B cell (primary cell): ENCODE measurements at regions of chr22 and their contacts with region 1.

Region 1: DNA sequence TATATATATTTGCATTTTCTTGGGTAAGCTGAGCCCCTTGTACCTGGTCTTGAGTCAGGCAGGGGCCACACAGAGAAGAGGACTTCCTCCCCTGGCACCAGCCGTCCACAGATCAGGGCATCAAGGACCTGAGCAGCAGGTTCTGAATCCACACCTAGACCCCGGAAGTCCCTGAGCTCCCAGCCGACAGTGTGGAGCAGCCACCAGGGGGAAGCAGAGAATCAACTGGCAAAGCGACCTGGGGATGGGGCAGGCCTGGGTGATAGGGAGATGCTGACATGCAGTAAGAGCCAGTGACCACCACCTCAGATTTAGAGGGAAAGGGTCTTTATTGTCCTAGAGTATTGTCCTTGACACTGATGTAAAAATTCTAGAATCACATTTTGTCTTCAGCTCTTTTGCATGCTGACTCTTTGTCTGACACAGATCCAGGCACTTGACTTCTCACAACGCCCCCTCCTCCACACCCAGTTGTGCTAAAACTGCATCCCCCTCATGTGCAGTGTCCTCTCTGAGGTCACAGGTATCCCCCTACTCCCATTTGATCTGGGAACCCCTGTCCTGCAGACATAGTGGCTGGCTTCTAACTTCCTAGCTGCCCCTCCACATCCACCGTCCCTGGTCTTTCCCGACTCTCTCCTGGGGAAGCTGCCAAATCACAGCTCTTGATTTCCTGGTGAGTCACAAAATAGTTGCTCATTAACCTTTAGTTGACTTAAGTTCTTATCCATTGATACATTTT is 109.3 kb downstream of the GGTLC2 start:
- DNase-seq: peak; percentile 79
- ATAC-seq: peak; percentile 86
- H3K4me3 ChIP-seq: no peak overlapping the region
- H3K4me3 Mint-ChIP-seq: no peak overlapping the region
- H3K27ac ChIP-seq: peak overlapping the region in 1 of 2 donors; percentile 12
- H3K27ac Mint-ChIP-seq: peak overlapping the region; percentile 72
- H3K4me1 ChIP-seq: peaks cover 14 to 17% of the 10 kb centered on the region in 2 donors
- H3K4me1 Mint-ChIP-seq: peaks cover 27% of the 10 kb centered on the region
- H3K27me3 ChIP-seq: no peaks in the 10 kb centered on the region
- H3K27me3 Mint-ChIP-seq: no peaks in the 10 kb centered on the region
- CTCF ChIP-seq: peak; percentile 74

Region 2: GRCh38 chr22:22666307-22667091 is 87.2 kb before region 1 on chr22:
- CTCF ChIA-PET with region 1: interaction called, 25 read pairs
- POLR2A ChIA-PET with region 1: no interaction called
- intact Hi-C with region 1: no loop called
- DNase-seq: peak; percentile 63
- ATAC-seq: peak; percentile 78
- H3K4me3 ChIP-seq: no peak overlapping the region
- H3K4me3 Mint-ChIP-seq: no peak overlapping the region
- H3K27ac ChIP-seq: no peak overlapping the region
- H3K27ac Mint-ChIP-seq: peak overlapping the region; percentile 6
- H3K4me1 ChIP-seq: peaks cover 6 to 18% of the 10 kb centered on the region in 2 donors
- H3K4me1 Mint-ChIP-seq: peaks cover 17% of the 10 kb centered on the region
- H3K27me3 ChIP-seq: peaks cover 0 to 2% (median 0%) of the 10 kb centered on the region in 4 experiments
- H3K27me3 Mint-ChIP-seq: peaks cover 3% of the 10 kb centered on the region
- CTCF ChIP-seq: peak; percentile 71

Region 3: GRCh38 chr22:22692707-22693530 is 60.8 kb before region 1 on chr22:
- CTCF ChIA-PET with region 1: interaction called, 24 read pairs
- POLR2A ChIA-PET with region 1: no interaction called
- intact Hi-C with region 1: no loop called
- DNase-seq: peak; percentile 83
- ATAC-seq: peak; percentile 81
- H3K4me3 ChIP-seq: no peak overlapping the region
- H3K4me3 Mint-ChIP-seq: peak overlapping the region; percentile 71
- H3K27ac ChIP-seq: peak overlapping the region in 1 of 2 donors; percentile 26
- H3K27ac Mint-ChIP-seq: peak overlapping the region; percentile 85
- H3K4me1 ChIP-seq: peaks cover 28 to 44% of the 10 kb centered on the region in 2 donors
- H3K4me1 Mint-ChIP-seq: peaks cover 34% of the 10 kb centered on the region
- H3K27me3 ChIP-seq: no peaks in the 10 kb centered on the region
- H3K27me3 Mint-ChIP-seq: no peaks in the 10 kb centered on the region
- CTCF ChIP-seq: peak; percentile 87

Region 4: DNA sequence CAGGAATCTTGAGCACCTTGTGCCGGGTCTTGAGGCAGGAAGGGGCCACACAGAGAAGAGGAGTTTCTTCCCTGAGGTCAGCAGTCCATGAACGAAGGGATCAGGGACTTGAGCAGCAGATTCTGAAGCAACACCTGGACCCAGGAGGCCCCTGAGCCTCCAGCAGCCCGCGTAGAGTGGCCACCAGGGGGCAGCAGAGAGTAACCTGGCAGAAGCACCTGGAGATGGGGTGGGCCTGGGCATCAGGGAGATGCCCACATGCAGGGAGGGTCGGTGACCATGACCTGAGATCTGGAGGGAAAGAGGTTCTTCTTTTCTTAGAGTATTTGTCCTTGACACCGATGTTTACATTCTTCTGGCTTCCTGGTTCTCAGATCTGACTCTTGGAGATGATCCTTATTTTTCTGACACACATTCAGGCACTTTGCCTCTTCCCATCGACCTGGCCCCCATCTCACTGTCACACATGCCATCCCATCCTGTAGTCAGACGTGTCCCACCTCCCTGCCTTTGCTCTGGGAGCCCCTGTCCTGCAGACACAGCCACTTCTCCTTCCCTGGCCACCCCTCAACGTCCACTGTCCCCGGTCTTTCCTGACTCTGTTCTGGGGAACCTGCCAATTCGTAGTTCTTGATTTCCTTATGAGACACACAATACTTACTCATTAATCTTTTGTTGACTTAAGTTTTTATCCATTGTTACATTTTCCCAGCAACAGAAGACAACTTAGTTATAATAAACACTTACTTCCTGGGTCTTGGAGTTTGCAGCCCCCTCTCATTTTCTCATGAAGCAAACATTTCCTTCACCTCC is 42.8 kb before region 1 on chr22:
- CTCF ChIA-PET with region 1: interaction called, 22 read pairs
- POLR2A ChIA-PET with region 1: no interaction called
- intact Hi-C with region 1: loop called (anchors 5 kb)
- DNase-seq: peak; percentile 80
- ATAC-seq: peak; percentile 48
- H3K4me3 ChIP-seq: no peak overlapping the region
- H3K4me3 Mint-ChIP-seq: peak overlapping the region; percentile 23
- H3K27ac ChIP-seq: no peak overlapping the region
- H3K27ac Mint-ChIP-seq: peak overlapping the region; percentile 76
- H3K4me1 ChIP-seq: peaks cover 30 to 53% of the 10 kb centered on the region in 2 donors
- H3K4me1 Mint-ChIP-seq: peaks cover 52% of the 10 kb centered on the region
- H3K27me3 ChIP-seq: peaks cover 0 to 2% (median 0%) of the 10 kb centered on the region in 4 experiments
- H3K27me3 Mint-ChIP-seq: peaks cover 3% of the 10 kb centered on the region
- CTCF ChIP-seq: peak; percentile 89

Region 5: DNA sequence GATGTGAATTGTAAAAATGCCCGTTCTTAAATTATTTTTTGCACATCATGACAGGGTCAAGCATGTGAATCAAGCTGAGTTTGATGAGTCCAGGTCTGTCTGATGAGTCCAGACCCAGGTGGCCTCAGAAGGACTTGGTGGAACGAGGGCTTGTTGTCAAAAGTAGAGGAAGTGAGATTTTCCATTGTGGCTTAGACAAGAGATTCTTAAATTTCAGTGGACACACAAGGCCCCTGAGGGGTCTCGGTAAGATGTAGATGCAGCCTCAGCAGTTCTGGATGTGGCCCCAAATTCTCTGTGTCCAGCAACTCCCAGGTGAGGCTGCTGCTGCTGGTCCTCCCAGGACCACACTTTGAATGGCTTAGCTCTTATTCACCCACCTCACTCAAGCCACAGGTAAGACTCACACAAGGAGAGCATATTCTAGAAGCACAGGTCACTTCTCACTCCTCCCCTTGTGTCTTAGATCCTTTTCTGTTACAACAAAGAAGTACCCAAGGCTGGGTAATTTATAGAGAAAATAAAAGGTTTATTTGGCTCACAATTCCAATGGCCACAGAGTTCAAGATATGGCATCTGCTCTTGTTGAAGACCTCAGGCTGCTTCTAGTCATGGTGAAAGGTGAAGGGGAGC is 10.5 kb before region 1 on chr22:
- CTCF ChIA-PET with region 1: interaction called, 19 read pairs
- POLR2A ChIA-PET with region 1: no interaction called
- intact Hi-C with region 1: no loop called
- DNase-seq: no peak
- ATAC-seq: no peak
- H3K4me3 ChIP-seq: no peak overlapping the region
- H3K4me3 Mint-ChIP-seq: no peak overlapping the region
- H3K27ac ChIP-seq: no peak overlapping the region
- H3K27ac Mint-ChIP-seq: peak overlapping the region; percentile 7
- H3K4me1 ChIP-seq: peaks cover 31 to 37% of the 10 kb centered on the region in 2 donors
- H3K4me1 Mint-ChIP-seq: peaks cover 39% of the 10 kb centered on the region
- H3K27me3 ChIP-seq: peaks cover 0 to 6% (median 2%) of the 10 kb centered on the region in 4 experiments
- H3K27me3 Mint-ChIP-seq: peaks cover 20% of the 10 kb centered on the region
- CTCF ChIP-seq: no peak

Region 6: DNA sequence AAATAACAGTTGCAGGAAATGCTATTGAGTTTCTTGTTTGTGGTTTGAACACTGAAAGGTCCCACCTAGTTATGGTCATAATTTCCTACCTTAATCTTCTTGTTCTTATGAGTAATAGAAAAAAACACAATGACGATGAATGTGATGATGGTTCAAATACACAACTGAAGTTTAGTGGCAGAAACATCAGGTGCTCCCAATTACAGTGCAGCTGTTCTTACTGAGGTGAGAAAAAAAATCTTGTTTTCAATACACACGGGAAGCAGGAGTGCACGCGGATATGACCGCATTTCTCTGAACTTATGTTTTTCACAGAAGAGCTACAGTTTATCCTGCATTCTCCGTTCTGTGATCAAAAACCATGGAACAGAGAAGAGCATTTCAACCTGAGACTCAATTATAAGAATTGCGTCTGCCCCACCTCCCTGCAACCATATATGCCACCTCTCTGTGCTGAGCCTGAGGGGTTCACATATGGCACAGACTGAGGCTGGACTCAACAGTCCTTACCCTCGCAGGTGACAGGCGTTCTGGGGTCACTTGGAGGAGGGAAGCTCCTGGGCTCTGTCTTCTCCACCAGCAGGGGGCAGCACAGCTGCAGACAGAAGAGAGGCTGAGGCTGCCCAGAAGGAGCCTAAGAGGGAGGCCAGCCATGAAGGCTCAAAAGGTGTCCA is 34.2 kb after region 1 on chr22:
- CTCF ChIA-PET with region 1: interaction called, 21 read pairs
- POLR2A ChIA-PET with region 1: no interaction called
- intact Hi-C with region 1: no loop called
- DNase-seq: peak; percentile 76
- ATAC-seq: peak; percentile 84
- H3K4me3 ChIP-seq: no peak overlapping the region
- H3K4me3 Mint-ChIP-seq: no peak overlapping the region
- H3K27ac ChIP-seq: no peak overlapping the region
- H3K27ac Mint-ChIP-seq: no peak overlapping the region
- H3K4me1 ChIP-seq: peaks cover 0 to 3% of the 10 kb centered on the region in 2 donors
- H3K4me1 Mint-ChIP-seq: no peaks in the 10 kb centered on the region
- H3K27me3 ChIP-seq: peaks cover 0 to 3% (median 0%) of the 10 kb centered on the region in 4 experiments
- H3K27me3 Mint-ChIP-seq: peaks cover 12% of the 10 kb centered on the region
- CTCF ChIP-seq: peak; percentile 81

Region 7: GRCh38 chr22:22935546-22936157 is 182.0 kb after region 1 on chr22:
- CTCF ChIA-PET with region 1: interaction called, 10 read pairs
- POLR2A ChIA-PET with region 1: interaction called, 3 read pairs
- intact Hi-C with region 1: no loop called
- DNase-seq: peak; percentile 97
- ATAC-seq: peak; percentile 89
- H3K4me3 ChIP-seq: peak overlapping the region in 2 of 5 experiments; percentile 7 to 37
- H3K4me3 Mint-ChIP-seq: peak overlapping the region; percentile 71
- H3K27ac ChIP-seq: peak overlapping the region; percentile 94 to 99
- H3K27ac Mint-ChIP-seq: peak overlapping the region; percentile 95
- H3K4me1 ChIP-seq: peaks cover 98 to 100% of the 10 kb centered on the region in 2 donors
- H3K4me1 Mint-ChIP-seq: peaks cover 98% of the 10 kb centered on the region
- H3K27me3 ChIP-seq: no peaks in the 10 kb centered on the region
- H3K27me3 Mint-ChIP-seq: no peaks in the 10 kb centered on the region
- CTCF ChIP-seq: peak; percentile 75

Region 8: GRCh38 chr22:22993184-22993583 is 239.5 kb after region 1 on chr22:
- CTCF ChIA-PET with region 1: no interaction called
- POLR2A ChIA-PET with region 1: no interaction called
- intact Hi-C with region 1: no loop called
- DNase-seq: no peak
- ATAC-seq: no peak
- H3K4me3 ChIP-seq: no peak overlapping the region
- H3K4me3 Mint-ChIP-seq: no peak overlapping the region
- H3K27ac ChIP-seq: no peak overlapping the region
- H3K27ac Mint-ChIP-seq: no peak overlapping the region
- H3K4me1 ChIP-seq: no peaks in the 10 kb centered on the region
- H3K4me1 Mint-ChIP-seq: no peaks in the 10 kb centered on the region
- H3K27me3 ChIP-seq: no peaks in the 10 kb centered on the region
- H3K27me3 Mint-ChIP-seq: peaks cover 10% of the 10 kb centered on the region
- CTCF ChIP-seq: no peak